HCT116 (cell line): ENCODE measurements at regions of chr7 and their contacts with region 1.

Region 1: DNA sequence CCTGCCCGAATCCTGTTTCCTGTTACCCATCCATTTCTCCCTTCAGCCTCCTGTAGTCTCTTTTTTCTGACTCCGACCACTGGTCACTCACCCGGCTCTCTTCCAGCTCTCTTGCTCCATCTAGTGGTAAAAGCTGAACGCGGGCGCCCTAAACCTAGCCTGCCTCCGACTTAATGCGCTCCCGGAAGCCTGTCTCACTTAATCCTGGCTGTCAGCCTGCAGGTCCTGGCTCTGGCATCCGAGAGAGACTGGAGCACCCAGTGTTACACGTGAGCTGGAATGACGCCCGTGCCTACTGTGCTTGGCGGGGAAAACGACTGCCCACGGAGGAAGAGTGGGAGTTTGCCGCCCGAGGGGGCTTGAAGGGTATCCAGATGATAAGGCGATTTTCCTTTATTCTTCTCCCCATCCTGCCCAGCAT is 10.3 kb downstream of the SUMF2 start:
- DNase-seq: no peak
- ATAC-seq: peak; percentile 93
- H3K4me3 ChIP-seq: no peak overlapping the region
- H3K27ac ChIP-seq: peak overlapping the region; percentile 42
- H3K4me1 ChIP-seq: no peaks in the 10 kb centered on the region
- H3K27me3 ChIP-seq: no peaks in the 10 kb centered on the region
- CTCF ChIP-seq: peak; percentile 85 to 96 (median 88)
- POLR2A ChIP-seq: no peak
- RAD21 ChIP-seq: peak; percentile 92

Region 2: DNA sequence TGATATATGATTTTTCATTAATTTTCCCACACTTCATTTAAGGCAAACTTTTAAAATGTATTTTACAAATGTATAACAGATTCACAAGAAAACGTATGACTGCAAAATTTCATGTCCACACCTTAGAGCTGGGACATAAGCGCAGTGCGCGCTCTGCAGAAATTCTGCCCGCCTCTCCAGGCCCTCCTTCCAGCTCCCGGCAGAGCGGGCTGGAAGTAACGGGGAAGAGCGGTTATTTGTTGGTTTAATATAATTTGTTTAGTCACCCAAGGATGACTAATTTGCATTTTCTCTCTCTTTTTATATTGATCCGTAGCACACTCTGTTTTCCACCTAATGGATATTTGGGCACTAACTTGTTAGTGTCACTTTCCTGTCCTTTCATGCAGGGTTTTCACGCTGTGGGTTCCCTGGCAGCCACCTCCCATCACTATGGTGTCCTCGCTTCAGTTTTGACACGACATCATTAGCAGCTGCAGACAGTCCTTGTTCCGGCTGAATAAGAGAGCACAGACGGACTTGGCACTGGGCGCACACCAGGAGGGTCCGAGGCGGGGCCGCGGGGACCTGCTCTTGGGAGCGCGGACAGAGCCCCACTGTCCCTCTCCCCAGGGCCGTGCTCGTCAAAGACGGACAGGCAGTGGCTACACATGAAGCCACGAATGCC is 1186.2 kb before region 1 on chr7:
- CTCF ChIA-PET with region 1: no interaction called
- POLR2A ChIA-PET with region 1: no interaction called
- RAD21 ChIA-PET with region 1: no interaction called
- intact Hi-C with region 1: no loop called
- DNase-seq: no peak
- ATAC-seq: no peak
- H3K4me3 ChIP-seq: no peak overlapping the region
- H3K27ac ChIP-seq: no peak overlapping the region
- H3K4me1 ChIP-seq: no peaks in the 10 kb centered on the region
- H3K27me3 ChIP-seq: no peaks in the 10 kb centered on the region
- CTCF ChIP-seq: no peak
- POLR2A ChIP-seq: no peak
- RAD21 ChIP-seq: no peak

Region 3: GRCh38 chr7:56009695-56010094 is 64.7 kb before region 1 on chr7:
- CTCF ChIA-PET with region 1: interaction called, 20 read pairs
- POLR2A ChIA-PET with region 1: no interaction called
- RAD21 ChIA-PET with region 1: no interaction called
- intact Hi-C with region 1: loop called (anchors 1 kb)
- DNase-seq: no peak
- ATAC-seq: peak; percentile 13; the same call in 1 of the 2 replicates
- H3K4me3 ChIP-seq: no peak overlapping the region
- H3K27ac ChIP-seq: 0 out of 2 replicates have a peak overlapping the region, but pooled peaks have one; percentile 26
- H3K4me1 ChIP-seq: no peaks in the 10 kb centered on the region
- H3K27me3 ChIP-seq: no peaks in the 10 kb centered on the region
- CTCF ChIP-seq: no peak
- POLR2A ChIP-seq: no peak
- RAD21 ChIP-seq: no peak

Region 4: DNA sequence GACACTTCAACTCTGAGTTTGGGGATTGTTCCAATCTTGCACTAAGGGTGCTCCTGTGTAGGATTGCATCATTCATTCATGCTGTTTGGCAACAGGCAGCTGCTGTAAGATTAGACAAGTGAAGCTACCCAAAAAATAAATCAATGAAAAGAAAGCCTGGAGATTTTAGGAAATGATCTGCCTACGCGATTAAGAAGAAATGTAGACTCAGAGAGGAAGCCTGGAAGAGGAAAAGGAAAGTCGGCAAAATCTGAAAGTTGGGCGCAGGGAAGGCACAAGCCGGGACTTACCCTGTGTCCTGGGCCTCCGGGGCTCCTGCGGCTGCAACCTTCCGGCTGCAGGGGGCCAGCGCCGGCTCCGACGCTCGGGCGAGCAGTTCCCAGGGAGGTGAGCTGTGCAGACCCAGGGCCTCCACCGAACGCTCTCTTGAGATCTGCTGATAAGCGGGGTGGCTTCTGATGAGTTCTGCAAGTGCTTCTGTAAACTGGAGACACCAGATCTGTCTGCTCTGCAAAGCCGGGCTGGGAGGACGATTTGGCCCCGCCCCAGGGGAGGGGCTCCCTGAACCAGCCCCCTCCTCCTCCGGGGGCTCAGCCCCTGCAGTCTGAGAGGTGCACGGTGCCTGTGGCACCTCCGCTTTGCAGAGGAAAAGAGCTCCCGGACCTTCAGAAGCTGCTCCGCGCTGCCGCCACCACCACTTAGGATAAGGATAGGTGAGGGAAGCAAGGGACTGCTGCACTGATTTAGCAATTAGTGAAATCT is 40.5 kb before region 1 on chr7:
- CTCF ChIA-PET with region 1: no interaction called
- POLR2A ChIA-PET with region 1: no interaction called
- RAD21 ChIA-PET with region 1: no interaction called
- intact Hi-C with region 1: loop called (anchors 5 kb)
- DNase-seq: peak; percentile 37
- ATAC-seq: peak; percentile 94
- H3K4me3 ChIP-seq: peak overlapping the region; percentile 62 to 66
- H3K27ac ChIP-seq: peak overlapping the region; percentile 82
- H3K4me1 ChIP-seq: peaks cover 8 to 18% of the 10 kb centered on the region in 2 experiments; a peak in 2 of 4 replicates
- H3K27me3 ChIP-seq: no peaks in the 10 kb centered on the region
- CTCF ChIP-seq: peak in 2 of 3 experiments; percentile 38 to 40; a peak in 4 of 6 replicates
- POLR2A ChIP-seq: no peak
- RAD21 ChIP-seq: no peak

Region 5: DNA sequence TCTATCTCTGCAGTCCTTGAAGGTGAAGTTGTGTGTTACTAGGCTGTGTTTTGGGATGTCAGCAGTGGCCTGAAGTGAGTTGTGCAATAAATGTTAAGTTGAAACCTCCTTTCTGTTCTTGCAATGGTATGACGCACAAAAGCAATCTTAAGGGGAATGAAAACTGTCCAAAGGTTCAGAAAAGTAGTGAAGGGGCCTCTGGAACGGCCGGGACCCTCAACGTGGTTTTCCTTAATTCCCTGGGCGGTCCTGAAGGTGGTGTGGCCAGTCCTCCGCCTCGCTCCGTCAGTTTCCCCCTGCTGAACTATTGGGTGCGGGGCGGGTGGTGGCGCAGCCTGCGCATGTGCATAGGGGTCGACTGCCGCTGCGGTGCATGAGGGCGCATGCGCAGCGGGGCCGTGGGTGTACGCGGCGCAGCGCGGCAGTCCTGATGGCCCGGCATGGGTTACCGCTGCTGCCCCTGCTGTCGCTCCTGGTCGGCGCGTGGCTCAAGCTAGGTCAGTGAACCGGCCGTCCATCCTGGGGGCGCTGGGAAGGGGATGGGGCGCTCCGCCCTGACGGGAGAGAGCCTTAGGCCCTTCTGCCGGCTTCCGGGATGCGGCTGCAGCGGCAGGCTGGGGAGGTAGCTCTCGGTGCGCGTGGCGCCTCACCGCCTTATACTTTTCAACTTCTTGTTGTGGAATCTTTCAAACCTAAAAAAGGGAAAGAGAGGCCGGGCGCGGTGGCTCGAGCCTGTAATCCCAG is 10.3 kb before region 1 on chr7 and contains the start of gene SUMF2:
- CTCF ChIA-PET with region 1: interaction called, 13 read pairs
- POLR2A ChIA-PET with region 1: interaction called, 4 read pairs
- RAD21 ChIA-PET with region 1: interaction called in 1 of 2 experiments, 3 read pairs
- intact Hi-C with region 1: no loop called
- DNase-seq: peak; percentile 78
- ATAC-seq: peak; percentile 86
- H3K4me3 ChIP-seq: peak within 1 kb of the TSS; percentile 88 to 94
- H3K27ac ChIP-seq: peak within 1 kb of the TSS; percentile 98
- H3K4me1 ChIP-seq: peaks cover 32 to 56% of the 10 kb centered on the region in 2 experiments
- H3K27me3 ChIP-seq: no peaks in the 10 kb centered on the region
- CTCF ChIP-seq: no peak
- POLR2A ChIP-seq: peak; percentile 82
- RAD21 ChIP-seq: no peak; the same call in 1 of the 2 replicates
- total RNA-seq, gene SUMF2: 173 TPM